Activated naive CD8-positive, alpha-beta T cell treated with anti-CD3 and anti-CD28 coated beads, Interleukin-2, amount 10 ng/mL, durations not matched to agents 7 days and 5 days (primary cell): ENCODE measurements at regions of chr5 and their contacts with region 1.

Region 1: DNA sequence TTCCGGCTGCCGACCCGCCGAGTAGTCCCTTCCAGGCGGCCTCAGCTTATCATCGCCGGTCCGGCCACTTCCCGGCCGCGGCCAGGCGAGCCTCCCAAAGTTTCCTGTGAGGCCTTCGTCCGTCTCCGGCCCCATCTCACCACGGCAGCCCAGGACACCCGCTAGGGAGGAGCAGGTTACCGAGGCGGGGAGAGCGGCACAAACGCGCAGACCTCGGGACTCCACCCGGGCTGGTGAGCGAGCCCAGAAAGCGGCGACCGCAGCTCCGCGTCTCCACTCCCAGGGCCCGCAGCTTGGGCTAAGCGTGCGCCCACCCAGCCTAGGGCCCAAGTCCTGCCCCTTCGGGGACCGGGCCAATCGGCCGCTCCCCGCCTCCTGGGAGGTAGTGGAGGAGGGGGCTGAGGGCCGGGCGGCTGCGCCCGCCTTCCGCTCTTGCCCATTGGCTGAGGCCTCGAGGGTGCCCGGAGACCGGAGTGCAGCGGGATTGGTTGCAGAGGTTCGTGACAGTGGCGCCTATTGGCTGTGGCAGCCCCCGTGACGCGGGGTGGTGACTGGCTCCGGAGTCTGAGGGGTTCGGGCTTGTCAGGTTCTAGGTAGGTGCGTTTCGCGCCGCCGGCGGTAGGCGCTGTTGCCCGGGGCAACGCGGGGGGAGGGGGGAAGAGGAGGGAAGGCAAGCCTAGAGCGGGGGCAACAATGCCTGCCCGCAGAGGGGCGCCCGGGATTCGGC is 867 bp downstream of the FER start:
- DNase-seq: peak; percentile 94
- ATAC-seq: peak; percentile 99
- H3K4me3 Mint-ChIP-seq: peak overlapping the region; percentile 94
- H3K27ac Mint-ChIP-seq: peak overlapping the region; percentile 80
- H3K4me1 Mint-ChIP-seq: peaks cover 10% of the 10 kb centered on the region
- H3K27me3 Mint-ChIP-seq: peaks cover 22% of the 10 kb centered on the region

Region 2: GRCh38 chr5:108681079-108681921 is 67.3 kb before region 1 on chr5:
- POLR2A ChIA-PET with region 1: no interaction called
- DNase-seq: no peak
- ATAC-seq: peak; percentile 71
- H3K4me3 Mint-ChIP-seq: no peak overlapping the region
- H3K27ac Mint-ChIP-seq: no peak overlapping the region
- H3K4me1 Mint-ChIP-seq: peaks cover 3% of the 10 kb centered on the region
- H3K27me3 Mint-ChIP-seq: peaks cover 6% of the 10 kb centered on the region

Region 3: GRCh38 chr5:108727651-108728565 is 20.7 kb before region 1 on chr5:
- POLR2A ChIA-PET with region 1: interaction called, 10 read pairs
- DNase-seq: peak; percentile 59
- ATAC-seq: peak; percentile 85
- H3K4me3 Mint-ChIP-seq: peak overlapping the region; percentile 76
- H3K27ac Mint-ChIP-seq: peak overlapping the region; percentile 75
- H3K4me1 Mint-ChIP-seq: peaks cover 19% of the 10 kb centered on the region
- H3K27me3 Mint-ChIP-seq: peaks cover 49% of the 10 kb centered on the region